Tibial artery (tissue), 4 donors: ENCODE measurements at regions of chrX and their contacts with region 1.

Region 1: GRCh38 chrX:130726661-130727060 is 176.3 kb downstream of the ENOX2 start:
- DNase-seq: peak in 1 of 2 donors; percentile 19
- H3K4me3 ChIP-seq: no peak overlapping the region
- H3K27ac ChIP-seq: no peak overlapping the region
- H3K4me1 ChIP-seq: no peaks in the 10 kb centered on the region
- H3K27me3 ChIP-seq: no peaks in the 10 kb centered on the region
- CTCF ChIP-seq: no peak

Region 2: GRCh38 chrX:130746709-130747342 is 20.2 kb after region 1 on chrX:
- intact Hi-C with region 1: loop called (anchors 2 kb)
- DNase-seq: no peak
- H3K4me3 ChIP-seq: no peak overlapping the region
- H3K27ac ChIP-seq: peak overlapping the region; percentile 22 to 39
- H3K4me1 ChIP-seq: peaks cover 0 to 11% (median under 1%) of the 10 kb centered on the region in 4 donors
- H3K27me3 ChIP-seq: no peaks in the 10 kb centered on the region
- CTCF ChIP-seq: no peak